SK-N-SH (cell line): ENCODE measurements at regions of chr2 and their contacts with region 1.

Region 1: DNA sequence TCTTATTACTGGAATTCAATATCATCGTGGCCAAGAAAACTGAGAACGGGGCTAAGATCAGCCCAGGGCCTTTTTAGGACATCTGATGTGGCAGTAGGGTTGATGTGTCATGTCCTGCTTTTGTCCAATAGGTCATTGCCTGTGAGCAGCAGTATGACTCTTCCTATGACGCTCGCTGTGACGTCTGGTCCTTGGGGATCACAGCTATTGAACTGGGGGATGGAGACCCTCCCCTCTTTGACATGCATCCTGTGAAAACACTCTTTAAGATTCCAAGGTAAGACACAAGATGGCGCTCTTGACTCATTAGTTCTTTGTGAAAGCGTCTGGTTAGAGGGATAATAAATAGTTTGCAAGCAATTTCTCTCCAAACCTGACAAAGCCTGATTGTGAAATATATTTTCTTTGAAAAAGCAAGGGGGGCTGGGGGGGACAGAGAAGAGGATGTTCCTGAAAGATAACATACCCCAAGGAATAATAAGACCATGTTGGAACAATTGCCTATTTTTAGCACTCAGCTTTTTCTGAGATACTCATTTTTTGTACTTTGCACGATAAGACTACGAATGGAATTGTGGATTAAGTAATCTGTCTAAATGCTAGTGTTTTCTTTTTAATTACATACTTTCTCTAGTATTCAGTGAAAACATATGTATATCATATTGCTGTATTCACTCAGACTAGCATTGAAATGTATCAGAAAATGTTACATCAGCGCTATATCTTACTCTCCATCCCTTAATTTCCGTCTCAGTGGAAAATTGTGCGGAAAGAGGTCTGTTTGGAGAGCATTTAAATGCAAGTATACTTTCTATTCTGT is 58.1 kb downstream of the MYO3B start:
- DNase-seq: peak; percentile 61
- H3K4me3 ChIP-seq: peak overlapping the region; percentile 14 to 17; a peak in 2 of 4 replicates
- H3K27ac ChIP-seq: no peak overlapping the region
- H3K4me1 ChIP-seq: peaks cover 0 to 5% of the 10 kb centered on the region in 2 experiments; a peak in 2 of 4 replicates
- H3K27me3 ChIP-seq: no peaks in the 10 kb centered on the region
- CTCF ChIP-seq: peak; percentile 73
- EP300 ChIP-seq: no peak
- RAD21 ChIP-seq: peak; percentile 85

Region 2: GRCh38 chr2:169975221-169975620 is 260.8 kb before region 1 on chr2:
- CTCF ChIA-PET with region 1: no interaction called
- POLR2A ChIA-PET with region 1: no interaction called
- DNase-seq: no peak
- H3K4me3 ChIP-seq: no peak overlapping the region
- H3K27ac ChIP-seq: no peak overlapping the region
- H3K4me1 ChIP-seq: no peaks in the 10 kb centered on the region
- H3K27me3 ChIP-seq: no peaks in the 10 kb centered on the region
- CTCF ChIP-seq: no peak
- EP300 ChIP-seq: no peak
- RAD21 ChIP-seq: no peak

Region 3: DNA sequence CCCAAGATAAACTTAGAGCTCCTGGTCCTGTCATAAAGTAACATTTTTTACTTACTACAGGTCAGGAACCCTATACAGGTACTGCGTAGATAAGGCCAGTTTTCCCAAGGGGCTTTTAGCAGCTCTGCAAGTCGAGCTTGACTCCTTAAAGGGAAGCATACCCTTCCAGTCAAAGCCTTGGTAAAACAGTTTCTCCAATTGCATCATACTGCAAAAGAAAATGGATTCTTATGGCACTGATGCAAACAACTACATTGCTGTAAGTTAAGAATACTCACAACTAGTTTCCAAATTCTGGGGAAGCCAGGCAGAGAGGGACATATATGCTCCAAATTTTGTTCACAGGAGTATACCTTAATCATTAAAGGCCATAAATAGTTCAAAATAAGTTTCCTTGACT is 27.1 kb before region 1 on chr2:
- CTCF ChIA-PET with region 1: no interaction called
- POLR2A ChIA-PET with region 1: no interaction called
- DNase-seq: no peak
- H3K4me3 ChIP-seq: no peak overlapping the region
- H3K27ac ChIP-seq: no peak overlapping the region
- H3K4me1 ChIP-seq: no peaks in the 10 kb centered on the region; a peak in 1 of 4 replicates
- H3K27me3 ChIP-seq: no peaks in the 10 kb centered on the region
- CTCF ChIP-seq: no peak
- EP300 ChIP-seq: no peak
- RAD21 ChIP-seq: no peak

Region 4: GRCh38 chr2:170324640-170325046 is 88.6 kb after region 1 on chr2:
- CTCF ChIA-PET with region 1: interaction called, 19 read pairs
- POLR2A ChIA-PET with region 1: no interaction called
- DNase-seq: peak; percentile 24
- H3K4me3 ChIP-seq: peak overlapping the region in 1 of 2 experiments; percentile 31; a peak in 1 of 4 replicates
- H3K27ac ChIP-seq: no peak overlapping the region
- H3K4me1 ChIP-seq: no peaks in the 10 kb centered on the region
- H3K27me3 ChIP-seq: no peaks in the 10 kb centered on the region
- CTCF ChIP-seq: peak; percentile 62
- EP300 ChIP-seq: no peak
- RAD21 ChIP-seq: peak; percentile 83

Region 5: GRCh38 chr2:170369894-170370293 is 133.8 kb after region 1 on chr2:
- CTCF ChIA-PET with region 1: interaction called, 29 read pairs
- POLR2A ChIA-PET with region 1: no interaction called
- DNase-seq: peak; percentile 11
- H3K4me3 ChIP-seq: no peak overlapping the region
- H3K27ac ChIP-seq: no peak overlapping the region
- H3K4me1 ChIP-seq: no peaks in the 10 kb centered on the region
- H3K27me3 ChIP-seq: peaks cover 15% of the 10 kb centered on the region; the same call in 1 of the 2 replicates
- CTCF ChIP-seq: peak; percentile 58
- EP300 ChIP-seq: no peak
- RAD21 ChIP-seq: peak; percentile 52; the same call in 1 of the 2 replicates

Region 6: GRCh38 chr2:170409164-170409535 is 173.1 kb after region 1 on chr2:
- CTCF ChIA-PET with region 1: interaction called, 11 read pairs
- POLR2A ChIA-PET with region 1: no interaction called
- DNase-seq: peak; percentile 66
- H3K4me3 ChIP-seq: no peak overlapping the region; a peak in 1 of 4 replicates
- H3K27ac ChIP-seq: no peak overlapping the region
- H3K4me1 ChIP-seq: no peaks in the 10 kb centered on the region
- H3K27me3 ChIP-seq: no peaks in the 10 kb centered on the region; the same call in 1 of the 2 replicates
- CTCF ChIP-seq: peak; percentile 95
- EP300 ChIP-seq: no peak
- RAD21 ChIP-seq: peak; percentile 70